SK-N-SH (cell line): ENCODE measurements at regions of chr9 and their contacts with region 1.

Region 1: DNA sequence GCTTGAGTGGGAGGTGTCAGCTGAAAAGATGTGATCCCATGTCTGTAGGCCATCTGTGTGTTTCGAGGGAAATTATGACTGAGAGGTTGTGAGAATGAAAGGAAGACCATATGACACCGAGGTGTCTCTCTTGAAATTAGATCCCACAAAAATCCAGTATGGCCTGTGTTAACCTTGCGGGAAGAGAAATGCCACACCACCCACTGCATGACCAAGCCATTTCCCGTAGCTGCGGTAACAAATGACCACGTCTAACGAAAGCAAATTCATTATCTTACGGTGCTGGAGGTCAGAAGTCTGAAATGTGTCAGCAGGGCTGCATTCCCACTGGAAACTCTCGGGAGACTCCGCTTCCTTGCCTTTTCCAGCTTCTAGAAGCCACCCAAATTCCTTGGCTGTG is 11.6 kb downstream of the C9orf57 start:
- DNase-seq: no peak
- H3K4me3 ChIP-seq: no peak overlapping the region
- H3K27ac ChIP-seq: no peak overlapping the region
- H3K4me1 ChIP-seq: peaks cover 0 to 12% of the 10 kb centered on the region in 2 experiments; a peak in 1 of 4 replicates
- H3K27me3 ChIP-seq: no peaks in the 10 kb centered on the region; the same call in 1 of the 2 replicates
- CTCF ChIP-seq: no peak
- EP300 ChIP-seq: no peak
- RAD21 ChIP-seq: no peak

Region 2: GRCh38 chr9:72006501-72006900 is 42.3 kb before region 1 on chr9:
- CTCF ChIA-PET with region 1: no interaction called
- POLR2A ChIA-PET with region 1: no interaction called
- DNase-seq: no peak
- H3K4me3 ChIP-seq: no peak overlapping the region
- H3K27ac ChIP-seq: no peak overlapping the region
- H3K4me1 ChIP-seq: no peaks in the 10 kb centered on the region
- H3K27me3 ChIP-seq: no peaks in the 10 kb centered on the region
- CTCF ChIP-seq: no peak
- EP300 ChIP-seq: no peak
- RAD21 ChIP-seq: no peak

Region 3: GRCh38 chr9:72271613-72272478 is 223.0 kb after region 1 on chr9:
- CTCF ChIA-PET with region 1: interaction called, 20 read pairs
- POLR2A ChIA-PET with region 1: no interaction called
- DNase-seq: peak; percentile 50
- H3K4me3 ChIP-seq: no peak overlapping the region; a peak in 1 of 4 replicates
- H3K27ac ChIP-seq: no peak overlapping the region
- H3K4me1 ChIP-seq: no peaks in the 10 kb centered on the region
- H3K27me3 ChIP-seq: peaks cover 34% of the 10 kb centered on the region
- CTCF ChIP-seq: peak; percentile 89
- EP300 ChIP-seq: no peak
- RAD21 ChIP-seq: peak; percentile 75